HepG2 (cell line): ENCODE measurements at regions of chr20 and their contacts with region 1.

Region 1: DNA sequence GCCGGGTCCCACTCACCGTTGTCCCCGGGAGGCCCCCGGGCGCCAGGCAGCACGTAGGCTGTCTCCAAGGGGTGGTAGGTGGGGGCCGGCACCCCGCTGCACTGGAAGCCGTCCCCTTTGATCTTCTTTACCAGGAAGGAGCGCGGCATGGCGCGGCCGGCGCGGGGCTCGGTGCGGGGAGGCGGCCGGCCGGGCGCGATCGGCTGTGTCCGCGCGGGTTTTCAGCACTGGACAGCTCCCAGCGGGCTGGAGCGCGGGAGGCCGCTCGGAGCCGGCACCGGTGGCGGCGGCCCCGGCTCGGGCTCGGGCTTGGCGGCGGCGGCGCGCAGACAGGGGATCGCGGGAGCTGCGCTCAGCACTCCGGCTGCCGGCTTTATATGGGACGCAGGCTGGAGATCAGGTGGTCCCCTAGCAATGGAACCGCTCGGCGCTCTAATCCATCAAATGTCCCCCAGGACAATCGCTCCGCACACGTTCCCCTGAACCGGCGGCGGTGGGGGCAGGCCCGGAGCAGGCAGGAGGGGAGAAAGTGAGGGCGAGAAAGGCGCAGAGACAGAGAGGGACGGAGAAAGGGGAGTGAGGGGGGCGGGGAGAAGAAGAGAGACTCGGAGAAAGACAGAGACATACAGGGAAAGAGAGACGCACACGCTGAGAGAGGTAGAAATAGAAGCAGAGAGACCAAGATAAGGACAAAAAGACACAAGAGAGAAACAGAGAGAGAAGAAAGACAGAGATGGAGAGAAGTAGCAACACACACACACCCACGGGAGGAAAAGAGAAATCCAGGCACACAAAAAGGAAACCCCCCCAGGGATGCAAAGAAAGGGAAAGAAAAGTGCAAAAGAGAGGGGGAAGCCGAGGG is at the start of gene SCRT2:
- DNase-seq: peak; percentile 54
- ATAC-seq: peak; percentile 94
- H3K4me3 ChIP-seq: peak within 1 kb of the TSS in 1 of 3 experiments; percentile 7; a peak in 1 of 6 replicates
- H3K27ac ChIP-seq: no peak within 1 kb of the TSS
- H3K4me1 ChIP-seq: peaks cover 5% of the 10 kb centered on the region; the same call in 1 of the 2 replicates
- H3K27me3 ChIP-seq: peaks cover 15 to 63% of the 10 kb centered on the region in 2 experiments; a peak in 4 of 5 replicates
- CTCF ChIP-seq: no peak
- EP300 ChIP-seq: no peak
- POLR2A ChIP-seq: no peak
- RAD21 ChIP-seq: peak; percentile 78
- total RNA-seq, gene SCRT2: not detected in 2 replicates

Region 2: DNA sequence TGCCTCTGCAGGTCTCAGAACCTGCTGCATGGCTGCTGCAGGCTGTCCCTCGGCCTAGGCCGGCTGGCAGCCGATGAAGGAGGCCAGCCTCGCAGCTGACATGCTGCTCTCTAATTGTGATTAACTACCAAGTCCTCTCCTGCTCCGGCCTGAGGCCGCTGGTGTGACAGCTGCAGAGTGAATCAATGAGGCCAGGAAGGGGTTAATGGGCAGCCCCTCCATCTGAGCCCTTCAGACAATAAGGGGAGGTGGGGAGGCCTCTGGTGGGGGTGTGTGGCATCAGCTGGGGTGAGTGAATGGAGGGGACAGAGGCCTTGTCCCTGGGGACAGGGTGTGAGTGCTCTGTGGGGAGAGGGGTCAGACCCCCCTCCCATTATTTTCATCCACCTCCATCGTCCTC is 58.2 kb after region 1 on chr20:
- CTCF ChIA-PET with region 1: interaction called, 3 read pairs
- POLR2A ChIA-PET with region 1: no interaction called
- in situ Hi-C with region 1: no loop called
- intact Hi-C with region 1: loop called (anchors 1 kb)
- DNase-seq: no peak
- ATAC-seq: no peak
- H3K4me3 ChIP-seq: no peak overlapping the region
- H3K27ac ChIP-seq: no peak overlapping the region
- H3K4me1 ChIP-seq: peaks cover 3% of the 10 kb centered on the region; the same call in 1 of the 2 replicates
- H3K27me3 ChIP-seq: peaks cover 3 to 26% of the 10 kb centered on the region in 2 experiments
- CTCF ChIP-seq: no peak
- EP300 ChIP-seq: no peak
- POLR2A ChIP-seq: no peak
- RAD21 ChIP-seq: no peak

Region 3: DNA sequence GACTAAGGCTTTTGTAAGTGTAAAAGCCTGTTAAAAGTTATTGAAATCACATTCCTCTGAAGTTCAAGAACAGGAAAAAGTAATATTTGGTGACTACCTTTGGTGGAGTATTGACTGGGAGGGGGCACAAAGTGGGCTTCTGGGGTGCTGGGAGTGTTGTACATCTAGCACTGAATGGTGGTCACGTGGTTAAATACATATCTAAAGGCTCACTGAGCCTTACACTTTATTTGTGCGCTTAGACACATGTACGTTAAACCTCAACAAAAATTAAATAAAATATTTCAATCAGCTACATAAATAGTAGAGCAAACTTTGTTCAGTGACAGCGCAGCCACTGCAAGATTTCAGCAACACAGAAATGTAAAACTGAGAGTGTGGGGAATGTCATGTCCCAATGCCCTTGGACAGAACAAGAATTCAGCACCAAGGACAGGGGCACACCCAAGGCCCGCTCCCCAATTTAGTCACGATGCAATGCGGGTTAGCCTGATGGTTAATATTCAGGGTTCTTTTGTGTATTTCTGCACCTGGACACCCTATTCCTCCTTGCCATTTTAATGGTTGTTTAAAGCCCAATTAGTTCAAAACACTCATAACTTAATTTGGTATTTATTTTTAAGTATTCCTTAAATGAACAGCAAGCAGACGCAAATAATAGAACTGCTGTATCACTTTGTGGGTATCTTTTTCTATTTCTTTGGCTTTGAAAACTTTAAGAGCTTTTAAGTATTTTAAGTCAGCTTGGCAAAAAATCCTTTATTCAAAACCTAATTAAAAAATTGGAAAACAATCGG is 203.0 kb after region 1 on chr20:
- CTCF ChIA-PET with region 1: no interaction called
- POLR2A ChIA-PET with region 1: no interaction called
- in situ Hi-C with region 1: no loop called
- intact Hi-C with region 1: loop called (anchors 5 kb)
- DNase-seq: no peak
- ATAC-seq: 0 out of 3 replicates have a peak, but pooled peaks have one; percentile 19
- H3K4me3 ChIP-seq: no peak overlapping the region
- H3K27ac ChIP-seq: no peak overlapping the region
- H3K4me1 ChIP-seq: no peaks in the 10 kb centered on the region
- H3K27me3 ChIP-seq: peaks cover 0 to 5% of the 10 kb centered on the region in 2 experiments; a peak in 2 of 5 replicates
- CTCF ChIP-seq: no peak
- EP300 ChIP-seq: no peak
- POLR2A ChIP-seq: no peak
- RAD21 ChIP-seq: no peak